H1 (cell line): ENCODE measurements at regions of chr4 and their contacts with region 1.

Region 1: GRCh38 chr4:24686871-24687680 is 102.7 kb upstream of the DHX15 start:
- DNase-seq: peak in 1 of 2 experiments; percentile 88
- H3K4me3 ChIP-seq: no peak overlapping the region
- H3K27ac ChIP-seq: no peak overlapping the region
- H3K4me1 ChIP-seq: peaks cover 0 to 19% (median 2%) of the 10 kb centered on the region in 4 experiments; a peak in 3 of 7 replicates
- H3K27me3 ChIP-seq: no peaks in the 10 kb centered on the region
- CTCF ChIP-seq: peak; percentile 75 to 93 (median 81)
- EP300 ChIP-seq: no peak
- POLR2A ChIP-seq: no peak
- RAD21 ChIP-seq: peak; percentile 86 to 90

Region 2: GRCh38 chr4:24488399-24489164 is 198.5 kb before region 1 on chr4:
- CTCF ChIA-PET with region 1: interaction called, 17 read pairs
- POLR2A ChIA-PET with region 1: no interaction called
- DNase-seq: peak in 1 of 2 experiments; percentile 98
- H3K4me3 ChIP-seq: no peak overlapping the region
- H3K27ac ChIP-seq: no peak overlapping the region
- H3K4me1 ChIP-seq: peaks cover 0 to 3% (median 0%) of the 10 kb centered on the region in 4 experiments; a peak in 3 of 7 replicates
- H3K27me3 ChIP-seq: peaks cover 0 to 1% (median 0%) of the 10 kb centered on the region in 4 experiments; a peak in 1 of 7 replicates
- CTCF ChIP-seq: peak; percentile 86 to 97 (median 96)
- EP300 ChIP-seq: no peak
- POLR2A ChIP-seq: no peak
- RAD21 ChIP-seq: peak; percentile 89 to 91

Region 3: DNA sequence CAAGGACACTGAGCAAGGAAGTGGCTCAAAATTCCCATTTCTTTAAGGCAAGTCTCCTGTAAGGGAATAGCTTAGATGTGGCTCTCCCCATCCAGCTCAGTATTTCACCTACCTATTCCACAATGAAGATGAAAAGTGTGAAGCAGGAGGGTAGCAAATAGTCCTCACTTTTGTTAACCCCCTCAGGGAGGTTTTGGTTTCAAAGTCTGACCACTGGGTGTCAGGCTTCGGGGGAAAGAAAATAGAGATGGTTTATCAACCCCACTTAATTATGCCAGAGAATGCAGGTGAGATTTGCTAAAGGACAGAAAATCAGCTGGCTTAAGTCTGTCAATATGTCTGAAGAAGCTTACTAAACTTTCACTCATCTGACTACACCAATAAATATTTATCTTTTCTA is 172.3 kb before region 1 on chr4:
- CTCF ChIA-PET with region 1: interaction called, 11 read pairs
- POLR2A ChIA-PET with region 1: interaction called, 4 read pairs
- DNase-seq: no peak
- H3K4me3 ChIP-seq: no peak overlapping the region
- H3K27ac ChIP-seq: no peak overlapping the region
- H3K4me1 ChIP-seq: peaks cover 9 to 17% (median 14%) of the 10 kb centered on the region in 4 experiments; a peak in 6 of 7 replicates
- H3K27me3 ChIP-seq: no peaks in the 10 kb centered on the region
- CTCF ChIP-seq: peak in 2 of 3 experiments; percentile 40 to 48; a peak in 3 of 4 replicates
- EP300 ChIP-seq: no peak
- POLR2A ChIP-seq: no peak; a peak in 1 of 3 replicates
- RAD21 ChIP-seq: peak; percentile 34 to 40; a peak in 3 of 4 replicates

Region 4: DNA sequence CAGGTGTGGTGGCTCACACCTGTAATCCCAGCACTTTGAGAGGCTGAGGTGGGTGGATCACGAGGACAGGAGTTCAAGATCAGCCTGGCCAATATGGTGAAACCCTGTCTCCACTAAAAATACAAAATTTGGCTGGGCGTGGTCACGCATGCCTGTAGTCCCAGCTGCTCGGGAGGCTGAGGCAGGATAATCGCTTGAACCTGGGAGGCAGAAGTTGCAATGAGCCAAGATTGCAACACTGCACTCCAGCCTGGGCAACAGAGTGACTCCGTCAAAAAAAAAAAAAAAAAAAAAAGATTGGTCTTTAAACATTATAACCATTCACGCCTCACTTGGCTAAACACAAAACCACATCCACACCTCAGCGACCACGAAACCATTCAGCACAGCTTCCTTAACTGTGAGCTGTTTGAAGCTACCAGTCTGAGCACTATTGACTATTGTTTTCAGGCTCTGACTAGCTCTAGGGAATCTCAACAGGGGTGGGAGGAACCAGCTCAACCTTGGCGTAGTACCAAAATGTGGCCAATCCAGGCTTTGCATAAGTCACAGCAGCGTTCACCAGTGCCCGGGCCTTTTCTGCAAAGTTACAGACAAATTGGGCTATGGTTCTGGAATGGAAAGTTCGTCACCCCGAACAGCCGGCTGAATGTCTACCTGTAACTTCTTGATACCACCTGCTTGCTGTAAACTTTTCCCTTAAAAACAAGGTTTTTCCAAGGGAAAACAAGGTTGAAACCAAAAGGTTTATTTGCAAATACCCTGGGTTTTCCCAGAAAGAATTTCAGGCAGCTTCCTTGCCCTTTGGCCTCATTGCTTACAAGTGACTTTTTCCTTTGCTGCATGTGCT is 29.1 kb before region 1 on chr4:
- CTCF ChIA-PET with region 1: interaction called, 11 read pairs
- POLR2A ChIA-PET with region 1: no interaction called
- DNase-seq: no peak
- H3K4me3 ChIP-seq: peak overlapping the region in 1 of 4 experiments; percentile 3; a peak in 1 of 8 replicates
- H3K27ac ChIP-seq: no peak overlapping the region; the same call in 1 of the 2 replicates
- H3K4me1 ChIP-seq: peaks cover 7 to 42% (median 32%) of the 10 kb centered on the region in 4 experiments
- H3K27me3 ChIP-seq: no peaks in the 10 kb centered on the region; a peak in 1 of 7 replicates
- CTCF ChIP-seq: no peak
- EP300 ChIP-seq: no peak
- POLR2A ChIP-seq: no peak
- RAD21 ChIP-seq: no peak

Region 5: DNA sequence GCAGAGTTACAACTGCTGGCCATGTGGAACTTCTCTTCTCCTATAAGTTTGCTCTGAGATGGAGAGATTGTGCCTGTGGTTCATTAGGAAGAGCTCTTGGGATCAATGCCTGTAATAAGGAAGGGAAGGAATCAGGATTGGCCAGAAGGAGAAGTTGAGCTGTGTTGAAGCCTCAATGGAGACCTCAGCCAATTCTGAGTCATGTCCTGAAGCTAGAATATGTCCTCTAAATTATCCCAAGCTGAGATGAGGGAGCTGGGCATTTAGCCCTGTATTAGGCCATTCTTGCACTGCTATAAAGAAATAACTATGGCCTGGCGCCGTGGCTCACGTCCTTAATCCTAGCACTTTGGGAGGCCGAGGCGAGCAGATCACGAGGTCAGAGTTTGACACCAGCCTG is 17.3 kb before region 1 on chr4:
- CTCF ChIA-PET with region 1: interaction called, 10 read pairs
- POLR2A ChIA-PET with region 1: no interaction called
- DNase-seq: no peak
- H3K4me3 ChIP-seq: no peak overlapping the region
- H3K27ac ChIP-seq: no peak overlapping the region
- H3K4me1 ChIP-seq: no peaks in the 10 kb centered on the region; a peak in 1 of 7 replicates
- H3K27me3 ChIP-seq: no peaks in the 10 kb centered on the region
- CTCF ChIP-seq: no peak
- EP300 ChIP-seq: no peak
- POLR2A ChIP-seq: no peak
- RAD21 ChIP-seq: no peak

Region 6: GRCh38 chr4:24675721-24676389 is 11.2 kb before region 1 on chr4:
- CTCF ChIA-PET with region 1: interaction called, 12 read pairs
- POLR2A ChIA-PET with region 1: no interaction called
- DNase-seq: no peak
- H3K4me3 ChIP-seq: no peak overlapping the region
- H3K27ac ChIP-seq: no peak overlapping the region
- H3K4me1 ChIP-seq: peaks cover 0 to 9% (median 3%) of the 10 kb centered on the region in 4 experiments; a peak in 5 of 7 replicates
- H3K27me3 ChIP-seq: no peaks in the 10 kb centered on the region
- CTCF ChIP-seq: no peak
- EP300 ChIP-seq: no peak
- POLR2A ChIP-seq: no peak
- RAD21 ChIP-seq: no peak

Region 7: DNA sequence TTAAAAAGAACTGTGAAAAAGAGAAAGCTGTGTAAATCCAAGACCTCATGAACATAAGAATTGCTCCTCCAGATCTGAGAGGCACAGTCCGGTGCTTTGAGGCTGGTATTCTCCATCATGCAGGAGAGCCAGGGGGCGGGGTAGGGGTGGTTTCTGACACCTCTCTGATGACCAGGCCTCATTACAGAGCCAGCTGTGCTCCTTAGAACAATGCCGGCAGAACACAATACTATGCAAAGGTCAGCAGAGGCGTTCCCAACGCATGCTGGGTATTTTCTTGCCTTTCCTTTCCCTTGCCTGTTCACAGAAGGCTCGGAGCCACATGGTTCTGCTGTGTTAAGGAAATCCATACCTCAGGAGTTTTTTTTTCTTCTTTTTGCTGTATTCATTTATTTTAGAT is 17.1 kb after region 1 on chr4:
- CTCF ChIA-PET with region 1: interaction called, 24 read pairs
- POLR2A ChIA-PET with region 1: interaction called, 4 read pairs
- DNase-seq: peak in 1 of 2 experiments; percentile 44
- H3K4me3 ChIP-seq: no peak overlapping the region
- H3K27ac ChIP-seq: no peak overlapping the region
- H3K4me1 ChIP-seq: peaks cover 0 to 4% (median 0%) of the 10 kb centered on the region in 4 experiments; a peak in 2 of 7 replicates
- H3K27me3 ChIP-seq: no peaks in the 10 kb centered on the region
- CTCF ChIP-seq: no peak
- EP300 ChIP-seq: no peak
- POLR2A ChIP-seq: no peak
- RAD21 ChIP-seq: no peak; a peak in 1 of 4 replicates